Motor neuron (in vitro differentiated cells): ENCODE measurements at regions of chr19 and their contacts with region 1.

Region 1: GRCh38 chr19:33241530-33242101 is 16.0 kb upstream of the SLC7A10 start:
- ATAC-seq: peak; percentile 42 to 85 (median 62)
- H3K4me3 ChIP-seq: no peak overlapping the region
- H3K27ac ChIP-seq: no peak overlapping the region
- H3K4me1 ChIP-seq: no peaks in the 10 kb centered on the region

Region 2: GRCh38 chr19:33080761-33081681 is 160.6 kb before region 1 on chr19 and contains the start of gene GPATCH1:
- in situ Hi-C with region 1: no loop called
- ATAC-seq: peak; percentile 66 to 94 (median 91)
- H3K4me3 ChIP-seq: peak within 1 kb of the TSS; percentile 73 to 95 (median 78)
- H3K27ac ChIP-seq: peak within 1 kb of the TSS; percentile 86 to 90
- H3K4me1 ChIP-seq: peaks cover 4 to 10% of the 10 kb centered on the region in 2 donors
- total RNA-seq, gene GPATCH1: 5.9 to 11.1 (median 9.2) TPM

Region 3: DNA sequence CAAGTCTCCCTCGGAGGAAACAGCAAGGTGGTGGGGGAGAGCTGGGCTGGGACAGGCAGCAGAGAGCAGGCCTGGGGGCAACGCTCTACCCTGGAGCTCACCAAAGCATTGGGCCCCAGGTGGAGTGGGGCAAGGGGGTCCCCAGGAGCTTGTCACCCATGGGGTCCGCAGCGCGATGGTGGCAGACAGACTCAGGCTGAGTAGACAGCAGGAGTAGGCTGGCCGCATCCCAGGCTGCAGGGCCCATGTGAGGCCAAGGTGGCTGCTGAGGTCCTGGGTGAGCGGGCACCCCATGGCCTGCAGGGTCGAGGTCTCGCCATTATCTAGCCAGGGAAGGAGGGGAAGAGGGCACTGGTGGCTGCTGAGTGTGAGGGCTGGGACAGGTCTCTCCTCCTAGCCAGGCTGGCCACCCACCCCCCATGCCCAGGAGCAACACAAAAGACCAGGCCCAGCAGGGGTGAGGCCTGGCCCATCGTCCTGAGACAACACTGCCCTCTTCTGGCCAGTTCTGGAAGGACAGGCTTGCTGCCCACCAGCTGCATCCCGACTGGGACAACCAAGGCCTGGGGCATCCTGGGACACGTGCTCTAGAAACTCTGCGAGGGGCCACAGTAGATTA is 165.0 kb after region 1 on chr19:
- in situ Hi-C with region 1: loop called in 8 of 9 experiments (anchors 10 to 25 kb)
- ATAC-seq: peak; percentile 45 to 82 (median 80)
- H3K4me3 ChIP-seq: no peak overlapping the region
- H3K27ac ChIP-seq: no peak overlapping the region
- H3K4me1 ChIP-seq: peaks cover 0 to 3% of the 10 kb centered on the region in 2 donors